A673 (cell line): ENCODE measurements at regions of chr14 and their contacts with region 1.

Region 1: GRCh38 chr14:98069712-98070171 is 1202.3 kb downstream of the BCL11B start:
- DNase-seq: peak; percentile 29
- H3K4me3 ChIP-seq: no peak overlapping the region
- H3K27ac ChIP-seq: no peak overlapping the region
- H3K4me1 ChIP-seq: peaks cover 3% of the 10 kb centered on the region
- H3K27me3 ChIP-seq: no peaks in the 10 kb centered on the region
- CTCF ChIP-seq: no peak

Region 2: GRCh38 chr14:96824283-96824682 is 1245.5 kb before region 1 on chr14:
- CTCF ChIA-PET with region 1: no interaction called
- POLR2A ChIA-PET with region 1: interaction called, 13 read pairs
- intact Hi-C with region 1: no loop called
- DNase-seq: no peak
- H3K4me3 ChIP-seq: no peak overlapping the region
- H3K27ac ChIP-seq: no peak overlapping the region
- H3K4me1 ChIP-seq: peaks cover 16% of the 10 kb centered on the region
- H3K27me3 ChIP-seq: no peaks in the 10 kb centered on the region
- CTCF ChIP-seq: no peak

Region 3: DNA sequence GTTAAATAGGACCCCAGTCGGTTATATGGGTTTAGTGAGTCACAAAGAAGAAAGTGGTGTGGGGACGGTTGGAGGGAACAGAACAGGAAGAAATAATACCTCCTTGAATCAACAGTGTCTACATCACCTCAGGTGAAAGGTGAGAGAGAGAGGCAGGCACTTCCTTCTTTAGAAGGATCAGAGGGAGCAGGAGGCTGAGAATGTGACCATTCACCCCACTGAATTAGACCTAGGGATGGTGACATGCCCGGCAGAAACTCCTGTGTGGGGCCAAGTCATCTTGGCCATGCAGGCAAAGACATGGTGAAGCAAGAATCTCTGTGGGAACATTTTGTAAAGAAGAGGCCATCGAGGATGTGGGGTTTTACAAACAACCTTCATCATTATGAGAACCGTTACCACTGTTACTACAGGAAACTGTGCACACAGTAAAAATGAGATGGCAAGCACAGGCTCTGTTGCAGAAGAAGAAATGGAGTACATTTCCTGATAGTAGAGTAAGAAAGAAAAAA is 75.7 kb before region 1 on chr14:
- CTCF ChIA-PET with region 1: no interaction called
- POLR2A ChIA-PET with region 1: no interaction called
- intact Hi-C with region 1: no loop called
- DNase-seq: no peak
- H3K4me3 ChIP-seq: no peak overlapping the region
- H3K27ac ChIP-seq: no peak overlapping the region
- H3K4me1 ChIP-seq: no peaks in the 10 kb centered on the region
- H3K27me3 ChIP-seq: no peaks in the 10 kb centered on the region
- CTCF ChIP-seq: no peak

Region 4: GRCh38 chr14:98350213-98350612 is 280.5 kb after region 1 on chr14:
- CTCF ChIA-PET with region 1: no interaction called
- POLR2A ChIA-PET with region 1: no interaction called
- intact Hi-C with region 1: no loop called
- DNase-seq: no peak
- H3K4me3 ChIP-seq: no peak overlapping the region
- H3K27ac ChIP-seq: no peak overlapping the region
- H3K4me1 ChIP-seq: no peaks in the 10 kb centered on the region
- H3K27me3 ChIP-seq: no peaks in the 10 kb centered on the region
- CTCF ChIP-seq: no peak